Posterior vena cava (tissue), 2 donors: ENCODE measurements at regions of chr11 and their contacts with region 1.

Region 1: DNA sequence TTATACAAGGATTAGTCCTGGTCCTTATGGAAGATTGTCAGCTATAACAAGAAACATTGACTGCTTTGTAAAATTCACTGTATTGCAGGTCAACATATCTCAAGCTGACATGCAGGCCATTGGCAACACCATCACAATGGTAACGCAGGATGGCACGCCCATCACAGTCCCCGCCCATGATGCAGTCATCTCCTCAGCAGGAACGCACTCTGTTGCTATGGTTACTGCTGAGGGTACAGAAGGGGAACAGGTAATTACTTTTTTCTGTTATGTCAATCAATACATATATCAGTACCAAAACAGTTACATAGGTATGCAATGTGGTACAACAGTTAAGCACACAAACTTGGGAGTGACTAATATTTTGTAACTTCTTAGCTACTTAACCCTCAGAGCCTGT is 55.3 kb downstream of the ZNF143 start:
- DNase-seq: no peak

Region 2: DNA sequence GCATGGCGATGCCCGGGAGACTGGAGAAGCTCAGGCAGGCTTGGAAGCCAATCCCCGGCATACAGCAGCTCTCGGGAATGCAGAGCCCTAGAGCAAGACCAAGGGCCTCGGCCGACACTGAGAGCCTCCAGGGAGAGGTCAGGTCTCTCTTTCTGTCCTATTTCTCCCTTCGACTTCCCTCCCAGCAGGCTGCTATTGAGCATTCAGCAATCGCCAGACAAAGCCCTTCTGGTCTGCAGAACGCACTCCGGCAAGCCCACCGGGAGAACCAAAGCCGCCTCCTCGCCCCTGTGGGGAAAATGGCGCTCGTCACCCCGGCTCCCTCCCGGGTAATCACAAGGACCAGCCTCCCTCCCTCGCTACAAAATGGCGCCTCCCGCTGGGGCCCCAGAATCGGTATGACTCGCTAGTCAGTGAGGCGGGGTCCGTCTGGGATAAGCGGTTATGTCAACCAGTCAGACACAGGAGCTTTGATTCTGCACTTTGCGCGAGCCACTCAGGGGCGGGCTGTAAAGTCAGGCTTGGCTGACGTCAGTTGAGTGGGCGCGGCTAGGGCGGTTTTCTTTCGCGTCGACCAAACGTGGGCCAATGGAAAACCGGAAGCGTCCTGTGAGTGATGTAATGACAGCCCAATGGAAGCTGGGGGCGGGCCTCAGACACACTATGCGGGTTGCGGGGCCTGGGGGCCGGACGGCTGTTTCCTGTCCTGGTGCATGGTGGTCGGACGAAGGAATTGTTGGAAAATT is 55.6 kb before region 1 on chr11 and contains the start of gene ZNF143:
- intact Hi-C with region 1: no loop called
- DNase-seq: peak; percentile 100
- total RNA-seq, gene ZNF143: 28.5 to 31.3 TPM

Region 3: GRCh38 chr11:9601037-9601875 is 85.1 kb after region 1 on chr11:
- intact Hi-C with region 1: loop called in 1 of 2 experiments (anchors 10 kb)
- DNase-seq: no peak